ENCODE measurements at regions of chr16 and their contacts with region 1.

Region 1: DNA sequence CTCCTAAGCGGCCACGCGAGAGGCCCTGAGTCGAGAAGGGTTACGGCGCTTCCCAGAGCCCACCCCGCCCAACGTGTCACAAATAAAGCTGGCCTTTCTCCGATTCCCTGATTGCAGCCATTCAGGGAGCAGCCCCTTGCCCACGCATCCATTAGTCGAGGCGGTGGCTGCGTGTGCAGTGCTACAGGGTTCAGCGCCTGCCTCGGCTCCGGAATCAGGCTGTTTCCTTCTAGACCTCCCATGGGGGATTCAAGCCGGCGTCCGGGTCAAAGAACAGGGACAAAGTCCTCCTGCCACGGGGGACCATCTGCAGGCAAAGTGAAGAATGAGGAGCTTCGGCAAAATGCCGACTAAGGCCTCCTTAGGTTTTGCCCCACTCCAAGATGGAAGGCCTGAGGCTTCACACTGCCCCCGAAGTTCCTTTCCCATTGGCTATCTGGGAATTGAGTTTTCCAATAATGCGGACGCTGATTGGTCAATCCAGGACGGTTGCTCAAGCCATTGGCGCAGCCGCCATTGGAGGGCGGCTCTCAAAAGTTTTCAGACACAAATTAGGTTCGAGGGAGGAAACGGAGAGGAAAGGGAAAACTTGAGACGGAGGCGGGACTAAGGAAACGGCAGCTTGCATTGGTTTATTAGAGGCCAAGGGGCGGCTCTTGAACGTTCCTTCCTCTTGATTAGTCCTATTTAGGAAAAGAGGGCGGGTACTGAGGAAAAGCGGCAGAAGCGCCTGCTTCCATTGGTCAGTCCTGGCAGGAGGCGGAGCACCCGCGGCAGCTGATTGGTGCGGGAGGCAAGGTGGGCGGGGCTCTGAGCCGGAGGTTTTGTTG is 430 bp upstream of the KATNB1 start:
- DNase-seq: peak; percentile 98
- H3K4me3 Mint-ChIP-seq: peak overlapping the region; percentile 91
- H3K27ac Mint-ChIP-seq: peak overlapping the region; percentile 96
- H3K4me1 Mint-ChIP-seq: peaks cover 19% of the 10 kb centered on the region
- H3K27me3 Mint-ChIP-seq: no peaks in the 10 kb centered on the region

Region 2: DNA sequence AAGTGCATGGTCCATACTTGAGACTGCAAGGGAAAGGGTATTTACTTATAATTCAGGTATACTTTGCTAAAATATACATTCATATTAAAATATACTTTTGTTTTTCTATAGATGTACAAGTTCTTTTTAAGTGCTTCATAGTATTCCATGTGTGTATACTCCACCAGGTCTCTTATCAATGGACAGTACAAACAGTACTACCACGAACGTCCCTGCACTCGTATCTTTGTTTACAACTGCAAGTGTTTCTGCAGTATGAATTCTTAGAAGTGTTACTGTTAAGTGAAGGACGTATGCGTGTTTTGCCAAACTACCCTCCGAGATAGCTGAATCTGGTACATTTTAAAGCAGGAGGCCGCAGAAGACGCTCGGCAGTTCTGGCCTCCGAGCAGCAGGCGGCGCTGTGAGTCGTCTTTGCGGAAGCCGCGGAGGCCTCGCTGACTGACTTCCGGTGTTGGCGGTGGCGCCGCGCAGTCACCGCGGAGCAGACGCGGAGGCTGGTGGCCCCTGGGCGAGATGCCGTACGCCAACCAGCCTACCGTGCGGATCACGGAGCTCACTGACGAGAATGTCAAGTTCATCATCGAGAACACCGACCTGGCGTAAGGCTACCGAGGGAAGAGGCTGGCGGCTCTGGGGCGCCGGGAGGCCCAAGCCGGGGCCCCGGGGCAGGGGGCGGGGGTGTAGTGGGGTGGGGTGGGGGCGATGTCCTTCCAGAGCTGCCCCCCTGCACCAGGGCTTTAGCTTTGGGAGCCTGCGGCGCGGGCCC is 272.7 kb before region 1 on chr16 and contains the start of gene POLR2C:
- CTCF ChIA-PET with region 1: no interaction called
- intact Hi-C with region 1: loop called (anchors 5 kb)
- DNase-seq: peak; percentile 95
- H3K4me3 Mint-ChIP-seq: peak within 1 kb of the TSS; percentile 100
- H3K27ac Mint-ChIP-seq: peak within 1 kb of the TSS; percentile 99
- H3K4me1 Mint-ChIP-seq: peaks cover 30% of the 10 kb centered on the region
- H3K27me3 Mint-ChIP-seq: no peaks in the 10 kb centered on the region
- total RNA-seq, gene POLR2C: 49.4 to 53.0 TPM

Region 3: GRCh38 chr16:57591086-57591869 is 143.9 kb before region 1 on chr16:
- CTCF ChIA-PET with region 1: interaction called, 3 read pairs
- intact Hi-C with region 1: loop called (anchors 1 kb)
- DNase-seq: peak; percentile 89
- H3K4me3 Mint-ChIP-seq: peak overlapping the region; percentile 40
- H3K27ac Mint-ChIP-seq: peak overlapping the region; percentile 90
- H3K4me1 Mint-ChIP-seq: peaks cover 32% of the 10 kb centered on the region
- H3K27me3 Mint-ChIP-seq: no peaks in the 10 kb centered on the region

Region 4: DNA sequence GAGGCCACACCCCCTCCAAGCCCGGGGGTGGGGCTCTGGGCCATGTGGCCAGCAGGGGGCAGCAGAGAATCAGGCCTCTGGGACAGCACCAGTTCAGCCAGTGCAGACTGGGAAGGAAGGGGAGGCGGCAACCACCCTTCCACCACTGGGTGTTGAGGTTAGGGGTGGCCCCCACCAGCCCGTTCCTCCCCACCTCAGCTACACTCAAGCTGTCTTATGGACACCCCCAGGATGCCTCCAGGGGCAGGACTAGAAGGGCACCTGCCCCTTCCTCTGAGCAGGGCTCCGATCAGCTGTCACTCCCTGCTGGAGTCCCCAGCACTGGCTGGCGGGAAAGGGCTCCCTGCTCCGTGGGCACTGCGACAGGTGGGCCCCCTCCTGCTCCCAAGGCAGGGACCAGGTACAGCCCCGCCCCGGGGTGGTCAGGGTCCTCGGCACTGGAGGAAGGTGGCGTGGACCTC is 22.2 kb after region 1 on chr16:
- CTCF ChIA-PET with region 1: interaction called, 6 read pairs
- intact Hi-C with region 1: loop called (anchors 1 kb)
- DNase-seq: peak; percentile 94
- H3K4me3 Mint-ChIP-seq: no peak overlapping the region
- H3K27ac Mint-ChIP-seq: no peak overlapping the region
- H3K4me1 Mint-ChIP-seq: no peaks in the 10 kb centered on the region
- H3K27me3 Mint-ChIP-seq: no peaks in the 10 kb centered on the region

Region 5: GRCh38 chr16:57781741-57782606 is 46.8 kb after region 1 on chr16:
- CTCF ChIA-PET with region 1: no interaction called
- intact Hi-C with region 1: no loop called
- DNase-seq: no peak
- H3K4me3 Mint-ChIP-seq: no peak overlapping the region
- H3K27ac Mint-ChIP-seq: no peak overlapping the region
- H3K4me1 Mint-ChIP-seq: peaks cover 2% of the 10 kb centered on the region
- H3K27me3 Mint-ChIP-seq: no peaks in the 10 kb centered on the region

Region 6: GRCh38 chr16:58000706-58001676 is 265.9 kb after region 1 on chr16 and contains the start of gene USB1:
- CTCF ChIA-PET with region 1: interaction called, 3 read pairs
- intact Hi-C with region 1: loop called (anchors 1 kb)
- DNase-seq: peak; percentile 78
- H3K4me3 Mint-ChIP-seq: peak within 1 kb of the TSS; percentile 91
- H3K27ac Mint-ChIP-seq: peak within 1 kb of the TSS; percentile 71
- H3K4me1 Mint-ChIP-seq: peaks cover 51% of the 10 kb centered on the region
- H3K27me3 Mint-ChIP-seq: no peaks in the 10 kb centered on the region
- total RNA-seq, gene USB1: 30.6 to 32.3 TPM

Measured in activated naive CD4-positive, alpha-beta T cell treated with anti-CD3 and anti-CD28 coated beads for 36 hours (primary cell).